K562 (cell line): ENCODE measurements at regions of chr11 and their contacts with region 1.

Region 1: GRCh38 chr11:46367244-46367915 is 14.1 kb upstream of the MDK start:
- DNase-seq: peak; percentile 57 to 83 (median 64)
- ATAC-seq: peak; percentile 86
- H3K4me3 ChIP-seq: no peak overlapping the region
- H3K27ac ChIP-seq: peak overlapping the region; percentile 45; the same call in 2 of the 3 replicates
- H3K4me1 ChIP-seq: peaks cover 12 to 53% of the 10 kb centered on the region in 2 experiments
- H3K27me3 ChIP-seq: no peaks in the 10 kb centered on the region
- CTCF ChIP-seq: peak; percentile 81 to 89 (median 84)
- EP300 ChIP-seq: no peak
- POLR2A ChIP-seq: no peak
- RAD21 ChIP-seq: peak; percentile 78 to 88

Region 2: GRCh38 chr11:46247664-46248063 is 119.7 kb before region 1 on chr11:
- CTCF ChIA-PET with region 1: interaction called, 3 read pairs
- POLR2A ChIA-PET with region 1: no interaction called
- in situ Hi-C with region 1: no loop called
- intact Hi-C with region 1: loop called (anchors 5 kb)
- DNase-seq: peak in 3 of 4 experiments; percentile 35 to 87 (median 71)
- ATAC-seq: peak; percentile 9; the same call in 2 of the 3 replicates
- H3K4me3 ChIP-seq: no peak overlapping the region
- H3K27ac ChIP-seq: peak overlapping the region; percentile 87
- H3K4me1 ChIP-seq: peaks cover 43 to 59% of the 10 kb centered on the region in 2 experiments
- H3K27me3 ChIP-seq: no peaks in the 10 kb centered on the region
- CTCF ChIP-seq: peak; percentile 79 to 92 (median 84)
- EP300 ChIP-seq: peak; percentile 46; the same call in 1 of the 2 replicates
- POLR2A ChIP-seq: no peak
- RAD21 ChIP-seq: peak; percentile 85 to 93

Region 3: GRCh38 chr11:46315033-46315738 is 52.2 kb before region 1 on chr11:
- CTCF ChIA-PET with region 1: no interaction called
- POLR2A ChIA-PET with region 1: interaction called, 5 read pairs
- in situ Hi-C with region 1: no loop called
- intact Hi-C with region 1: loop called (anchors 5 kb)
- DNase-seq: peak; percentile 86 to 95 (median 92)
- ATAC-seq: peak; percentile 87
- H3K4me3 ChIP-seq: no peak overlapping the region
- H3K27ac ChIP-seq: no peak overlapping the region
- H3K4me1 ChIP-seq: peaks cover 20 to 59% of the 10 kb centered on the region in 2 experiments
- H3K27me3 ChIP-seq: no peaks in the 10 kb centered on the region
- CTCF ChIP-seq: peak; percentile 81 to 94 (median 83)
- EP300 ChIP-seq: no peak
- POLR2A ChIP-seq: no peak
- RAD21 ChIP-seq: peak; percentile 58 to 73

Region 4: DNA sequence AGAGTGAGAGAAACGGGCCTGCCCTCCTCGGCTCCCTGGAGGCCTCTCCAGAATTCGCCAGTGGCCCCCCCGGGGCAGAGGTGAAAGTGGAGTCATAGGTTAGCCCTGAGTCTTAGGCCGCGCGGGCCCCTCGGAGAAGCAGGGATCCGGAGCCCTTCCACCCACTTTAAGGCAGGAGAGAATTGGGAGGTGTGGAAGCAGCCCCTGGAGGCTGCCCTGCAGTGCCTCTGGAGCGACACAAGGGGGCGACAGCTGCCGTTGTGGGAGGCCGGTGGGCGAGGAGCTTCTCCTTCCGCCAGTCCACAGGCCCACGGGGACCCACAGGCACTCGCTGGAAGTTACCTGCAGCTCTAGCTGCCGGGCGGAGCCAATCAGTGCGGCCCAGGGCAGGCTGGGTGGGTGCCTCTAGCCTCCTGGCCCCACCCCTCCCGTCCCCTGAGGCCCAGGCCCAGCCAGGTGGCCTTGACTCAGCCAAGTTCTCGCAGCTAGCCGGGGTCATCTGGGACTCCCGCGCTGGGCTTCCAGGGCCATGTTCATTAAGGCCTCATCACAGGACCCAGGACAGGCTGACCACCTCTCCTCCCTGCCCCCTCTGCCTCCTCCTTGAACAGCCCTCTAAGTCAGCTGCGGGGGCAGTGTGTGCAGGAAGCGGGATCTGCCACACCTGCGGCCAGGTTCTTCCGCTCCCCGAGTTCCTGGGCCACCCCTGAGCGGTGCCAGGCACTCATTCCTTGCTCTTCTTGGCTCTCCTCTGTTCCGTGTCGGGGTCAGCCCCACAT is 15.1 kb before region 1 on chr11:
- CTCF ChIA-PET with region 1: interaction called, 6 read pairs
- POLR2A ChIA-PET with region 1: interaction called, 7 read pairs
- in situ Hi-C with region 1: no loop called
- intact Hi-C with region 1: loop called (anchors 1 kb)
- DNase-seq: peak; percentile 75 to 89 (median 84)
- ATAC-seq: peak; percentile 76
- H3K4me3 ChIP-seq: peak overlapping the region; percentile 37
- H3K27ac ChIP-seq: peak overlapping the region; percentile 60; the same call in 2 of the 3 replicates
- H3K4me1 ChIP-seq: peaks cover 39 to 58% of the 10 kb centered on the region in 2 experiments
- H3K27me3 ChIP-seq: no peaks in the 10 kb centered on the region
- CTCF ChIP-seq: peak; percentile 93 to 96 (median 94)
- EP300 ChIP-seq: no peak
- POLR2A ChIP-seq: no peak; the same call in 1 of the 2 replicates
- RAD21 ChIP-seq: peak; percentile 79 to 87

Region 5: DNA sequence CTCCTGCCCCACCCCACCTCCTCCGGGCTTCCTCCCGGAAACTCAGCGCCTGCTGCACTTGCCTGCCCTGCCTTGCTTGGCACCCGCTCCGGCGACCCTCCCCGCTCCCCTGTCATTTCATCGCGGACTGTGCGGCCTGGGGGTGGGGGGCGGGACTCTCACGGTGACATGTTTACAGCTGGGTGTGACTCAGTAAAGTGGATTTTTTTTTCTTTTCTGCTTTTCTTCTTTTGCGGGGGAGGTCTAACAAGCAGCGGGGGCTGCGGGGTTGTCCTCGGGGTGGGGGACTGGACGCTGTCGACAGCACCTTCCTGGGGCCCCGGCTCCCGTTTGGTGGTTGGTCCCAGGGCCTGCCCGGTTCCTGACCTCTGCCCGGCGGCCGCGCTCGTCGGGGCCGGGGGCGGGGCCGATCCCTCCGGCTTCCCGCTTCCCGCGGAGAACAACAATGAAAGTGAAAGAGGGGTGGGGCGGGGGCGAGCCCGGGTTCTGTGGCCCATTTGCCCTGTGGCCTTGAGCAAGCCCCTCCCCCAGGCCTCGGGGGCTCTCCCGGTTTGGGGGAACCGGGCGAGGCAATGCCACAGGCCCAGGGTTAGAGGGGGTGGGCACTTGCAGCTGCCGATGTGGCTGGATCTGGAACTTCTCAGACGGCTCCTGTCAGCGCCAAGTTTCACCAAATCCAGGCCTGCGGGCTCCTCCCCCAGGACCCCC is 13.1 kb after region 1 on chr11:
- CTCF ChIA-PET with region 1: no interaction called
- POLR2A ChIA-PET with region 1: interaction called, 10 read pairs
- in situ Hi-C with region 1: no loop called
- intact Hi-C with region 1: no loop called
- DNase-seq: peak; percentile 86 to 90 (median 88)
- ATAC-seq: peak; percentile 62
- H3K4me3 ChIP-seq: peak overlapping the region; percentile 75
- H3K27ac ChIP-seq: peak overlapping the region; percentile 96
- H3K4me1 ChIP-seq: peaks cover 25 to 66% of the 10 kb centered on the region in 2 experiments
- H3K27me3 ChIP-seq: no peaks in the 10 kb centered on the region
- CTCF ChIP-seq: no peak
- EP300 ChIP-seq: no peak
- POLR2A ChIP-seq: peak; percentile 66
- RAD21 ChIP-seq: no peak

Region 6: DNA sequence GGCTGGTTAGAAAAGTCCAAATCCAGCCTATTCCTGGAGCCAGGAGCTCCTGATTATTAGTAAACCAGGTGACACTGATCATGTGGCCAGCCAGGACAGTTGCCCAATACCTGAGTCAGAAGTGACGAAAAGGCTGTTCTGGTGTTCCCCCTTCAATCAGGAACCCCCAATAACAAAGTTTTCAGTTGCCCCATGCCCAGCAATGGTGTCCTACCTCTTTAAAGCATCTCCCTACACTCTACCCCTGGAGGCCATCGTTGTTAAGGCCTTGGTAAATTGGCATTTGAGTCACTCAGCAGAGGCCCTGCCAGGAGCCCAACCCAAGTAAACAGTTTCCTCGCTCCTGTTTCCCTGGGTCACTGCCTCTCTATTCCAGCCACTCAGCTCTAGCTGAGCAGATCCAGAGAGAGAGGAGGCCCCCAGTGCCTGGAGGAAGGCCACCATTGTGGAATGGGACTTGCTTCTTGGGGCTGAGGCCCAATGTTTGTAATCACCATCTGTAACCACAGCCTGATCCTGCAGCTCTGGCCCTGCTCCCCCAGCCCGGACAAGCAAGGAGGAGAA is 308.0 kb after region 1 on chr11:
- CTCF ChIA-PET with region 1: no interaction called
- POLR2A ChIA-PET with region 1: no interaction called
- in situ Hi-C with region 1: no loop called
- intact Hi-C with region 1: no loop called
- DNase-seq: no peak
- ATAC-seq: peak; percentile 6; the same call in 2 of the 3 replicates
- H3K4me3 ChIP-seq: no peak overlapping the region
- H3K27ac ChIP-seq: no peak overlapping the region
- H3K4me1 ChIP-seq: peaks cover 0 to 4% of the 10 kb centered on the region in 2 experiments; a peak in 1 of 5 replicates
- H3K27me3 ChIP-seq: no peaks in the 10 kb centered on the region
- CTCF ChIP-seq: no peak
- EP300 ChIP-seq: no peak
- POLR2A ChIP-seq: no peak
- RAD21 ChIP-seq: no peak